Activated CD4-positive, alpha-beta T cell treated with anti-CD3 and anti-CD28 coated beads, Interleukin-2, amount 10 ng/mL, durations not matched to agents 7 days and 5 days (primary cell): ENCODE measurements at regions of chr13 and their contacts with region 1.

Region 1: DNA sequence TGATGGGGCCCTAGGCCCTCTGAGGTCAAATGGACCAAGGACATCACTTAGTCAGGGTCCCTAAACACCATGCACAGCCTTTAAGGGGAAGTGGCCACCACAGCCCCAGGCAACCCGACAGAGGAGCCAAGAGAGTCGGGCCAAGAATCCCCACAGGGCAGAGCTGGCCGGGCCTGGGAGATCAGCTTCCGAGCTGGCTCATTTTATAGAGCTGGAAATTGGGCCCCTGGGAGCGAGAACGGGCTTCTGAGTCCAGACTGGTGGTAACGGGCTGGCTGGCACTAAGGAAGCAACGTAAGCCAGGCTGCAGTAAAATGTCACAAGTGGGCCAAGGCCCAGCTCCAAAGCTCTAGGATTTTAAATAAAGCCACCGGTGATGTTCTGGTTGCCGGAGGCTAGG is 51.1 kb downstream of the HSPH1 start:
- DNase-seq: no peak
- H3K4me3 Mint-ChIP-seq: no peak overlapping the region
- H3K27ac Mint-ChIP-seq: no peak overlapping the region
- H3K4me1 Mint-ChIP-seq: no peaks in the 10 kb centered on the region
- H3K27me3 Mint-ChIP-seq: peaks cover 25% of the 10 kb centered on the region

Region 2: DNA sequence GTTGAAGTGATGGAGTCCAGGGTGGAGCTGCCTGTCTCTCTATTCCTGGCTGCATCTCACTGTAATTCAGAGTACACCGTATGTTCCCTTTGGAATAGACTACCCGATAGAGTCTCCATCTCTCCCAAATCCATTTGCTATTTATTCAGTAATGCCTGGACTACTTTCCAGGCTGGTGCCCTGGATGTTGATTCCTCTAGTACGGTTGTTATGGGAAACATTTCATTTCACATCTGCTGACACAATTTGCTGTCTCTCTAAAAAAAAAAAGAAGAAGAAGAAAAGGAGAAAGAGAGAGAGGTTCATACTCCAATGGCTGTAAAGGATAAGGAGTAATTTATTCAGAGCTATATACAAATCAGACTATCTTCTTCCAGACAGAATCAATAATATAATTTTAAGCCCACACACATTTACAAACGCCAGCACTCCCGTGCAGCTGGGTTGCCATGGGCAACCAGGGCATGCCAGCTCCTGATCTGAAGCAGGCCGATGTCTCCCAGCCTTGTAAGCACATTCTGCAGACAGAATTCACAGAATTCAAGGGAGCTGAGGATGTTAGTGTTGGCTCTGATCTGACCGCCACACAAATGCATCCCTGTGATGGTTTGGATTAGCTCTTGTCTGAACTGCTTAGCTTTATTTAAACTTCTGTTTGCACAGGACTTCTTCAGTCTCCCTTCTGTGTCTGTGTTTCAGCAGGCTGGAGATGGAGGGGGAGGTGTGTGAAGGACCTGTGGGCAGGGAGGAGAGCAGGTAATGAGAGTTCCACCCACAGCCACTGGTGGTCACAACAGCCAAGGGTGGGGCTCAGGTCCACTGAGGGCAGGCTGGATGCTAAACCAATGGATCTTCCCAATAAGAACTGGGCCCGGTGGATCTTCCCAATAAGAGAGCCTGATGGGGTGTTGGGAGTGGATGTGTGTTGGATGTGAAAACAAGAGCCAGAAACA is 112.2 kb before region 1 on chr13:
- CTCF ChIA-PET with region 1: no interaction called
- POLR2A ChIA-PET with region 1: no interaction called
- DNase-seq: no peak
- H3K4me3 Mint-ChIP-seq: no peak overlapping the region
- H3K27ac Mint-ChIP-seq: no peak overlapping the region
- H3K4me1 Mint-ChIP-seq: no peaks in the 10 kb centered on the region
- H3K27me3 Mint-ChIP-seq: peaks cover 15% of the 10 kb centered on the region

Region 3: DNA sequence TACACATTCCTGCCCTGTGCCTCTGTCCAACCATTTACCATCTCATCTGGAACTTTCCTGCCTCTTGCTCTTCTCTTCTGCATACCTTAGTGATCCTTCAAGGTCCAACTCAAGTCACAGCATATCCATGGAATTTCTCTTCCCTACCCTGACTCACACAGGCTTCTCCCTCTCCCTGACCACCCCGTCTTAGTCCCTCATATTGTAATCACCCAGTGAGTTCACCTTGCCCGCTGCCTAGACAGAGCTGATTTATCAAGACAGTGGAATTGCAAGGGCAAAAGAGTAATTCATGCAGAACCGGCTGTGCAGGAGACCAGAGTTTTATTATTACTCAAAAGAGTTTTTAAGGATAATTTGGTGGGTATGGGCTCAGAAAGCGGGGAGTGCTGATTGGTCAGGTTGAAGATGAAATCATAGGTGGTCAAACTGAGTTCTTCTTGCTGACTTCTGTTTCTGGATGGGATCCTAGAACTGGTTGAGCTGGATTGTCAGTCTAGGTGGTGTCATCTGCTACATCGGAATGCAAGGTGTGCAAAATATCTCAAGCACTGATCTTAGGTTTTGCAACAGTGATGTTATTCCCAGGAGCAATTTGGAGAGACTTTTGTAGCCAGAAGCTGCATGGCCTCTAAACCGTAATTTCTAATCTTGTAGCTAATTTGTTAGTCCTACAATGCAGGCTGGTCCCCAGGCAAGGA is 16.1 kb before region 1 on chr13:
- CTCF ChIA-PET with region 1: interaction called, 11 read pairs
- POLR2A ChIA-PET with region 1: no interaction called
- DNase-seq: no peak
- H3K4me3 Mint-ChIP-seq: no peak overlapping the region
- H3K27ac Mint-ChIP-seq: no peak overlapping the region
- H3K4me1 Mint-ChIP-seq: peaks cover 3% of the 10 kb centered on the region
- H3K27me3 Mint-ChIP-seq: peaks cover 19% of the 10 kb centered on the region